ENCODE measurements at regions of chr17 and their contacts with region 1.

Region 1: GRCh38 chr17:7989781-7990655 is 12.4 kb upstream of the GUCY2D start:
- DNase-seq: peak; percentile 93
- ATAC-seq: peak; percentile 94
- H3K4me3 ChIP-seq: peak overlapping the region in 4 of 5 experiments; percentile 65 to 70 (median 68)
- H3K4me3 Mint-ChIP-seq: peak overlapping the region; percentile 80
- H3K27ac ChIP-seq: peak overlapping the region; percentile 27 to 49
- H3K27ac Mint-ChIP-seq: peak overlapping the region; percentile 86
- H3K4me1 ChIP-seq: peaks cover 8 to 19% of the 10 kb centered on the region in 2 donors
- H3K4me1 Mint-ChIP-seq: peaks cover 23% of the 10 kb centered on the region
- H3K27me3 ChIP-seq: peaks cover 0 to 6% (median 0%) of the 10 kb centered on the region in 4 experiments
- H3K27me3 Mint-ChIP-seq: peaks cover 8% of the 10 kb centered on the region
- CTCF ChIP-seq: peak; percentile 99

Region 2: DNA sequence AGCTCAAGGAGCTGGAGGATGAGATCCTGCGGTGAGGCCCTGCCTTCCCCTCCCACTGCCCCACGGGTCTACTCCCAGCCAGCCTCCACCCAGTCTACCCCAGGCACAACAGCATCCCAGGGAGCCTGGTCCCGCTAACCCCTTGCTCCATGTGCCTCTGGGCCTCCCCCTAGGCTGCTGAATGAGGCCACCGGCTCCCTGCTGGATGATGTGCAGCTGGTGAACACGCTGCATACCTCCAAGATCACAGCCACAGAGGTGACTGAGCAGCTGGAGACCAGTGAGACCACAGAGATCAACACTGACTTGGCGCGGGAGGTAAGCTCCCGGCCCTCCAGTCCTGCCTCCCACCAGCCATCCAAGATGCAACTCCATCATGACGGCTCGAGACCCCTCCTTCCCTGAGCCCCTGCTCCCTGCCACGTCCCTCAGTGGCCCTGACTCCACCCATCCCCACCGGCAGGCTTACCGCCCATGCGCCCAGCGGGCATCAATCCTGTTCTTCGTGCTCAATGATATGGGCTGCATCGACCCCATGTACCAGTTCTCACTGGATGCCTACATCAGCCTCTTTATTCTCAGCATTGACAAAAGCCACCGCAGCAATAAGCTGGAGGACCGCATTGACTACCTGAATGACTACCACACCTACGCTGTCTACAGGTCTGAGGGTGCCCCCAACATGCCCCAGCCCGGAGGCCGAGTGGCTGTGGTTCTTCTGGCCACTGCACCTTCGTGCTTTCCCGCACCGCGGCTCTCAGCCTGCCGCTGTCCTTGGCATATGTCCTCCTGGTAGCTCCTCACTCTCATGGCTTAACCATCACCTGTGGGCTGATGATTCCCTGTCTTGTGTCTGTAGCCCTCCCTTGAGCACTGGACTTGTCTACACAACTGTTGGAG is 171.0 kb before region 1 on chr17:
- CTCF ChIA-PET with region 1: interaction called, 17 read pairs
- POLR2A ChIA-PET with region 1: no interaction called
- intact Hi-C with region 1: loop called (anchors 1 kb)
- DNase-seq: no peak
- ATAC-seq: no peak
- H3K4me3 ChIP-seq: no peak overlapping the region
- H3K4me3 Mint-ChIP-seq: no peak overlapping the region
- H3K27ac ChIP-seq: no peak overlapping the region
- H3K27ac Mint-ChIP-seq: no peak overlapping the region
- H3K4me1 ChIP-seq: no peaks in the 10 kb centered on the region
- H3K4me1 Mint-ChIP-seq: no peaks in the 10 kb centered on the region
- H3K27me3 ChIP-seq: no peaks in the 10 kb centered on the region
- H3K27me3 Mint-ChIP-seq: peaks cover 8% of the 10 kb centered on the region
- CTCF ChIP-seq: no peak

Region 3: GRCh38 chr17:7862692-7863437 is 127.2 kb before region 1 on chr17:
- CTCF ChIA-PET with region 1: interaction called, 144 read pairs
- POLR2A ChIA-PET with region 1: no interaction called
- intact Hi-C with region 1: loop called (anchors 1 kb)
- DNase-seq: peak; percentile 74
- ATAC-seq: no peak
- H3K4me3 ChIP-seq: no peak overlapping the region
- H3K4me3 Mint-ChIP-seq: no peak overlapping the region
- H3K27ac ChIP-seq: no peak overlapping the region
- H3K27ac Mint-ChIP-seq: peak overlapping the region; percentile 5
- H3K4me1 ChIP-seq: peaks cover 9 to 18% of the 10 kb centered on the region in 2 donors
- H3K4me1 Mint-ChIP-seq: peaks cover 9% of the 10 kb centered on the region
- H3K27me3 ChIP-seq: no peaks in the 10 kb centered on the region
- H3K27me3 Mint-ChIP-seq: no peaks in the 10 kb centered on the region
- CTCF ChIP-seq: peak; percentile 84

Region 4: DNA sequence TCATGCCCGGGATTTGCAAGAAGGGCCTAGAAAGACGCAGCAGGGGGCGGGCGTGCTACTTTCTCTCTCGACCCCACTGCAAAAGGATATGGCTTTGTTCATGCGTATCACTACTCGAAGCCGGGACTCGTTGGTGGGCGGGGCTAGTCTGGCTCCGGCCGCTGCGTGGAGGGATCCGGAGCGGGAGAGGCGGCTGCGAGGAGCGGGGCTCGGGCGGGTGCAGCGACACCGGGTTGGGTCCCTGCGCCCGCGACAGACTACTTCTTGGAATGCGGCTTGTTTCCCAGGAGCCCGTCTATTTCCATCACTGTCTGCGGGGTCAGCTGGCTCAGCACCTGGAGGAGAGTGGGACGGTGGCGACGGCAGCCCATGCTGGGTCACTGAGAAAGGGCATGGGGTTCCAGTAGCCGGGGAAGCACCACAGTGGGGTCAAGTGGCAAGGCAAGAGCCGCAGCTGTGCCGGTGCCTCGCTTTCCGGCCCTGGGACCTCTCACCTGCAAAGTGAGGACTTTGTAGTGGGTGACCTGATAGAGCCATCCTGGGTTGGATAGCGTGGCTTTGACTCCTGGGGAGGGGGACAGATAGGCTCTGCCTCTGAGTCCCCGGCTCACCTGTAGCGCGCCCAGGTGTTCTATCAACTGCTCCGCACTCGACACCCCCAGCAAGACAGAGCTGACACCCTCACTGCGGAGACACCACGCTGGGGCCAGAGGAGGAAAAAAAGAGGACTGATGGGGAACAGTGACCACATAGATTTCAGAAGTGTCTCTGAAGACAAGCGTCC is 67.0 kb before region 1 on chr17:
- CTCF ChIA-PET with region 1: interaction called, 284 read pairs
- POLR2A ChIA-PET with region 1: interaction called, 4 read pairs
- intact Hi-C with region 1: no loop called
- DNase-seq: peak; percentile 84
- ATAC-seq: peak; percentile 98
- H3K4me3 ChIP-seq: peak overlapping the region; percentile 32 to 64 (median 53)
- H3K4me3 Mint-ChIP-seq: peak overlapping the region; percentile 83
- H3K27ac ChIP-seq: peak overlapping the region; percentile 25 to 42
- H3K27ac Mint-ChIP-seq: peak overlapping the region; percentile 85
- H3K4me1 ChIP-seq: peaks cover 4 to 16% of the 10 kb centered on the region in 2 donors
- H3K4me1 Mint-ChIP-seq: peaks cover 13% of the 10 kb centered on the region
- H3K27me3 ChIP-seq: no peaks in the 10 kb centered on the region
- H3K27me3 Mint-ChIP-seq: no peaks in the 10 kb centered on the region
- CTCF ChIP-seq: no peak

Region 5: GRCh38 chr17:7951143-7951803 is 38.7 kb before region 1 on chr17:
- CTCF ChIA-PET with region 1: interaction called, 12 read pairs
- POLR2A ChIA-PET with region 1: no interaction called
- intact Hi-C with region 1: no loop called
- DNase-seq: peak; percentile 47
- ATAC-seq: peak; percentile 56
- H3K4me3 ChIP-seq: no peak overlapping the region
- H3K4me3 Mint-ChIP-seq: no peak overlapping the region
- H3K27ac ChIP-seq: peak overlapping the region in 1 of 2 donors; percentile 60
- H3K27ac Mint-ChIP-seq: peak overlapping the region; percentile 51
- H3K4me1 ChIP-seq: peaks cover 8 to 9% of the 10 kb centered on the region in 2 donors
- H3K4me1 Mint-ChIP-seq: peaks cover 11% of the 10 kb centered on the region
- H3K27me3 ChIP-seq: no peaks in the 10 kb centered on the region
- H3K27me3 Mint-ChIP-seq: no peaks in the 10 kb centered on the region
- CTCF ChIP-seq: no peak

Region 6: GRCh38 chr17:8222630-8223356 is 232.8 kb after region 1 on chr17:
- CTCF ChIA-PET with region 1: no interaction called
- POLR2A ChIA-PET with region 1: no interaction called
- intact Hi-C with region 1: no loop called
- DNase-seq: peak; percentile 95
- ATAC-seq: peak; percentile 43
- H3K4me3 ChIP-seq: peak overlapping the region; percentile 75 to 100 (median 78)
- H3K4me3 Mint-ChIP-seq: peak overlapping the region; percentile 89
- H3K27ac ChIP-seq: peak overlapping the region; percentile 90 to 93
- H3K27ac Mint-ChIP-seq: peak overlapping the region; percentile 96
- H3K4me1 ChIP-seq: peaks cover 32 to 50% of the 10 kb centered on the region in 2 donors
- H3K4me1 Mint-ChIP-seq: peaks cover 63% of the 10 kb centered on the region
- H3K27me3 ChIP-seq: no peaks in the 10 kb centered on the region
- H3K27me3 Mint-ChIP-seq: no peaks in the 10 kb centered on the region
- CTCF ChIP-seq: no peak